HepG2 (cell line): ENCODE measurements at regions of chr19 and their contacts with region 1.

Region 1: DNA sequence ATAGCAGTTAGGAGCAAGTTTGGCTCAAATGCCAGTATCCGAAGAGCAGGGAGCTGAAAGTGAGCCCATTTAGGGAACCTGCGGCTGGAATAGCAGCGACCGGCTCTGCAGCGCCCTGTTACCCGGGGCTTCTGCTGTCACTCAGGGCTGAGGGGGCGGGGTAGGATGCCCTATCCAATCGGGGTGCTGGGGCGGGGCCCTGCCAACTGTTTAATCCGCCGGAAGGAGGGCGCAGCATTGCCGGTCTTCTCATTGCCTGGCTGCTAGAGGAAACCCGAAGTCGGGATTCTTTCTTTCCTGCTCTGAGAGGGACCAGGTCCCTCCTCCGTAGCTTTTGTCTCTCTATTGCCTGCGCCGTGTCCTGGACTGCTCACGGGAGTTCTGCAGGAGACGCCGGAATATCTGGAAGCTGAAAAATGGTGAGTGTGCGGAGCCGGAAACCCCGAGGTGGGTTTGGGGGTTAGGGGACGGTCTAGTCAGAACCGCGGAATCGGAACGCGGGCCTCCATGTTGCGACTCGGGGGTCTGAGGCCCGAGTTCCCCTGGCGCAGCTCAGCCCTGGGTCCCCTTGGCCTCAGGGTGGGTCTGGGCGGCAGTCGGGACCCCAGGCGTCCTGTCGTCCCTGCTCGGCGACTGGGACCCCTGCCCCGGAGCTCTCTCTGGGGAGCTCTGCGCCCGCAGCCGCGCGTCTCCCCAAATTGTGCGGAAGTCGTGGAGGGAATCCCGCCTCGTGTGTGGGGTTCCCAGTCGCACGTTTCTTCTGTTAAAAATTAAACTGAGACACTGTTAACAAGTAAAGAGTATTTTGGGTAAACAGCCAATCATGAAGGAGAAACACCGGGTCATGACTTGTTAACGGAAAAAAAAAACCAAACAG is 22.8 kb downstream of the ZNF763 start:
- DNase-seq: peak; percentile 55
- ATAC-seq: peak; percentile 91
- H3K4me3 ChIP-seq: peak overlapping the region; percentile 48 to 72 (median 65); a peak in 5 of 6 replicates
- H3K27ac ChIP-seq: peak overlapping the region; percentile 40
- H3K4me1 ChIP-seq: peaks cover 18% of the 10 kb centered on the region; the same call in 1 of the 2 replicates
- H3K27me3 ChIP-seq: peaks cover 0 to 1% of the 10 kb centered on the region in 2 experiments; a peak in 1 of 5 replicates
- CTCF ChIP-seq: no peak
- EP300 ChIP-seq: no peak
- POLR2A ChIP-seq: peak; percentile 29 to 81; a peak in 3 of 4 replicates
- RAD21 ChIP-seq: no peak

Region 2: GRCh38 chr19:11881151-11881800 is 106.4 kb before region 1 on chr19:
- CTCF ChIA-PET with region 1: interaction called, 50 read pairs
- POLR2A ChIA-PET with region 1: interaction called, 4 read pairs
- in situ Hi-C with region 1: loop called (anchors 5 kb)
- intact Hi-C with region 1: loop called (anchors 1 kb)
- DNase-seq: peak; percentile 49
- ATAC-seq: peak; percentile 81
- H3K4me3 ChIP-seq: no peak overlapping the region
- H3K27ac ChIP-seq: no peak overlapping the region
- H3K4me1 ChIP-seq: peaks cover 9% of the 10 kb centered on the region; the same call in 1 of the 2 replicates
- H3K27me3 ChIP-seq: no peaks in the 10 kb centered on the region
- CTCF ChIP-seq: peak; percentile 94
- EP300 ChIP-seq: no peak
- POLR2A ChIP-seq: no peak
- RAD21 ChIP-seq: peak; percentile 87

Region 3: DNA sequence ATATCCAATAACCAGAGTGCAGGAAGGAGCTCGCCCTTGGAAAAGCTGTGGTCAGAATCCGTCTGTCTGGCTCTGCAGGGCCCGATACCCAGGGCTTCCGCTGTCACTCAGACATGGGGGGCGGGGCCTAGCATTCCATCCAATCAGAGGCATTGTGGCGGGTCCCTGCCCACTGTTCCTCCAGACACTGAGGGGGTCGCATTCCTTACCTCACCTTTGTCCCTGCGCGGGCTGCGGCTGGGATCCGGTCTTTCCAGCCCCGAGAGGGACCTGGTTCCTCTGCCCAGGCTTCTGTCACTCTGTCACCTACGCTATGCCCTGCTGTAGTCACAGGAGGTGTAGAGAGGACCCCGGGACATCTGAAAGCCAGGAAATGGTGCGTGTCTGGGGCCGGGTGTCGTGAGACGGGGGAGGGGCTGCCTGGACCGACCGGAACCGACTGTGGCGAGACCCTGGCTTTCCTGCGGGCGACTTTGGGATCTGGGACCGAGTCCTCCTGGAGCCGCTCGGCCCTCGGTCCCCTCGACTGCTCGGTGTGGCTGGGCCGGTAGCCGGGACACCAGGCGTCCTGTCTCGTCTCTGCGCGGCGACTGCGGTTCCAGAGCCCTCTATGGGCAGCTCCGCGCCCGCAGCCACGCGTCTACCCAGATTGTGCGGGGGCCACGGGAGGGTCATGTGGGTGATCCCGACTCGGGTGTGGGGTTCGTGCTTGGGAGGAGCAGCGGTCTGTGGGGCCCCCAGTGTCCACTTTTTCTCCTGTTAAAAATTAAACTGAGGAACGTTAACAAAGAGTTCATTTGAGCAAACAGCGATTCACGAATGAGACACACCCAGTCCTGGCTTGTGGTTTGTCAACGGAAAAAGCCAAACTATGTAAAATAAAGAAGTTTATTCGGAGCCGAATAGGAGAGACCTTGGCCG is 99.8 kb before region 1 on chr19 and contains the start of gene ZNF69:
- CTCF ChIA-PET with region 1: interaction called, 50 read pairs
- POLR2A ChIA-PET with region 1: interaction called, 7 read pairs
- in situ Hi-C with region 1: loop called (anchors 5 kb)
- intact Hi-C with region 1: no loop called
- DNase-seq: peak; percentile 92
- ATAC-seq: peak; percentile 96
- H3K4me3 ChIP-seq: peak within 1 kb of the TSS; percentile 62 to 80 (median 77)
- H3K27ac ChIP-seq: peak within 1 kb of the TSS; percentile 94
- H3K4me1 ChIP-seq: peaks cover 47% of the 10 kb centered on the region
- H3K27me3 ChIP-seq: no peaks in the 10 kb centered on the region; a peak in 1 of 5 replicates
- CTCF ChIP-seq: peak; percentile 42; the same call in 1 of the 2 replicates
- EP300 ChIP-seq: peak in 1 of 2 experiments; percentile 43; a peak in 2 of 4 replicates
- POLR2A ChIP-seq: peak; percentile 87 to 88
- RAD21 ChIP-seq: peak; percentile 46
- total RNA-seq, gene ZNF69: 21.0 and 35.5 TPM in 2 replicates

Region 4: GRCh38 chr19:11924886-11925650 is 62.6 kb before region 1 on chr19 and contains the start of gene ZNF700:
- CTCF ChIA-PET with region 1: interaction called, 22 read pairs
- POLR2A ChIA-PET with region 1: interaction called, 30 read pairs
- in situ Hi-C with region 1: no loop called
- intact Hi-C with region 1: loop called (anchors 1 kb)
- DNase-seq: peak; percentile 93
- ATAC-seq: peak; percentile 90
- H3K4me3 ChIP-seq: peak within 1 kb of the TSS; percentile 80 to 88 (median 85)
- H3K27ac ChIP-seq: peak within 1 kb of the TSS; percentile 97
- H3K4me1 ChIP-seq: peaks cover 51% of the 10 kb centered on the region
- H3K27me3 ChIP-seq: no peaks in the 10 kb centered on the region; a peak in 1 of 5 replicates
- CTCF ChIP-seq: no peak
- EP300 ChIP-seq: no peak
- POLR2A ChIP-seq: peak; percentile 84 to 97
- RAD21 ChIP-seq: peak; percentile 35
- total RNA-seq, gene ZNF700: 12.8 and 16.5 TPM in 2 replicates

Region 5: GRCh38 chr19:11964858-11965645 is 22.6 kb before region 1 on chr19 and contains the start of gene ZNF763:
- CTCF ChIA-PET with region 1: interaction called, 27 read pairs
- POLR2A ChIA-PET with region 1: no interaction called
- in situ Hi-C with region 1: no loop called
- intact Hi-C with region 1: loop called (anchors 1 kb)
- DNase-seq: peak; percentile 60
- ATAC-seq: peak; percentile 88
- H3K4me3 ChIP-seq: peak within 1 kb of the TSS in 2 of 3 experiments; percentile 31 to 42; a peak in 3 of 6 replicates
- H3K27ac ChIP-seq: no peak within 1 kb of the TSS
- H3K4me1 ChIP-seq: peaks cover 18% of the 10 kb centered on the region
- H3K27me3 ChIP-seq: no peaks in the 10 kb centered on the region
- CTCF ChIP-seq: no peak
- EP300 ChIP-seq: no peak
- POLR2A ChIP-seq: no peak
- RAD21 ChIP-seq: no peak
- total RNA-seq, gene ZNF763: 0.42 and 0.49 TPM in 2 replicates

Region 6: DNA sequence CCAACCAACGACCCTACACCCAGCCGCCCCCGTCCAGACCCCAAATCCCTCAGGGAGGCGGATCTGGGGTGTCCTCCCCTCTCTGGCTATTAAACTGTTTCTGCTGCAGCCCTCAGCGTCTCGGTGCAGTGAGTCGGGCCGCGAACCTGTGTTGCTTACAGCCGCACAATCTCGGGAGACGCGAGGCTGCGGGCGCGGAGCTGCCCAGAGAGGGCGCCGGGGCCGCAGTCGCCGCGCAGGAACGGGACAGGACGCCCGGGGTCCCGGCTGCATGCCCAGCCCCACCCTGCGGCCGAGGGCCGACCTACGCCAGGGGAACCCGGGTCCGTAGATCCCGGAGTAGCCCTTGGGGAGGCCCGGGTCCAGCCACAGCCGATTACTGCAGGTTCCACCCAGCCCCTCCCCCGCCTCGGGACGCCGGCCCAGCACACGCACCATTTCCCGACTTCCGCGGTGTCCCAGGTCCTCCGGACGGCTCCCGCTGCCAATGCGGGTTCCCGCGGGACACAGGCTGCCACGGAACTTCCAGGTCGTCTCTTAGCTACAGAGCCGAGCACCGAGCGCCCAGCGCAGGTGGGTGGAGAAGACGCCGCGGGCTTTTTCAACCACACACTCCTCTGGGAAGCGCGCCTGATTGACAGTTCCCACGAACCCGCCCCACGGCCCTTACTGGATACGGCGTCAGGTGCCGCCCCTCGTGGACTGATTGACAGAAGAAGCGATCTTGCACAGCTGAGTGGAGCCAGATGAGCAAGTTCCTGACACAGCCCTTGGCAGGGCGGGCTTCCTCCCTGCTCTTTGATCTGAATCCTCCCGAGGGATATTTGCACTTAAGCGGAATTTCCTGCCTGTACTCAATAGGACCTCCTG is 413.2 kb after region 1 on chr19 and contains the start of gene ZNF799:
- CTCF ChIA-PET with region 1: no interaction called
- POLR2A ChIA-PET with region 1: no interaction called
- in situ Hi-C with region 1: no loop called
- intact Hi-C with region 1: no loop called
- DNase-seq: peak; percentile 100
- ATAC-seq: peak; percentile 95
- H3K4me3 ChIP-seq: peak within 1 kb of the TSS; percentile 79 to 96 (median 92)
- H3K27ac ChIP-seq: peak within 1 kb of the TSS; percentile 88
- H3K4me1 ChIP-seq: peaks cover 26% of the 10 kb centered on the region
- H3K27me3 ChIP-seq: no peaks in the 10 kb centered on the region
- CTCF ChIP-seq: peak; percentile 17; the same call in 1 of the 2 replicates
- EP300 ChIP-seq: peak; percentile 59 to 61; a peak in 3 of 4 replicates
- POLR2A ChIP-seq: peak; percentile 78 to 83
- RAD21 ChIP-seq: peak; percentile 27; the same call in 1 of the 2 replicates
- total RNA-seq, gene ZNF799: 17.9 and 27.0 TPM in 2 replicates